CD4-positive, alpha-beta T cell (primary cell): ENCODE measurements at regions of chr2 and their contacts with region 1.

Region 1: DNA sequence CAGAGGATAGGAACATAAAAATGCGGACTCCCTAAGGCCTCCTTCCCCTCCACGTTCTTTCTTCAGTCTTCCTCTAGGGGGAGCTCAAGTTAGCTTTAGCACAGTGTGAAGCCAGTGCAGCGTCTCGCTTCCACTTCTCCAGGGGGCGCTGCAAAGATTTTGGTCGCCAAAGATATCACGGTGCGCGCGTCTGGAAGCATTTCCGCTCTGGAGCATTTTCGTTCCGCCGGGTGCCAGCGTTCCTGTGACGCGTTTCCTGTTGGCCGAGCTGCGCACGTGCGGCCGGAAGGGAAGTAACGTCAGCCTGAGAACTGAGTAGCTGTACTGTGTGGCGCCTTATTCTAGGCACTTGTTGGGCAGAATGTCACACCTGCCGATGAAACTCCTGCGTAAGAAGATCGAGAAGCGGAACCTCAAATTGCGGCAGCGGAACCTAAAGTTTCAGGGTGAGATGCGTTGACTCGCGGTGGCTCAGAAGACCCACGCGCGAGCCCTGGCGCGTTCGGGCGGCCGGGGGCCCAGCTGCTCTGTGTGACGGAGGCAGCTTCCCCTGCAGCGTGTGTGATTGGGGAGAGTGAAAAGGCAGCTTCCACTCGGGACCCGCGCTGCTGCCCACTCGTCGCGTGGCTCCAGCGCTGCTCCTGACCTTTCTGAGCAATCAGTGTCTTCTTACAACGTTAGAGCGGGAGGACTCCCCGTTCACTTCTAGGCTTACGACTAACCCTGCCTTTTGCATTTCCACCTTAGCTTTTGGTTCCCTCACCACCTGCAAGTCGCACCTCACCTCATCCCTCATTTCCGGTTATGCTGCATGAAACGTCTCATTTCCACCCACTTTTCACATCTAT is at the start of gene DDX18:
- DNase-seq: peak; percentile 94 to 99 (median 96)
- ATAC-seq: peak; percentile 84
- H3K4me3 ChIP-seq: peak within 1 kb of the TSS; percentile 73
- H3K4me3 Mint-ChIP-seq: peak within 1 kb of the TSS; percentile 86
- H3K27ac ChIP-seq: peak within 1 kb of the TSS; percentile 96 to 97
- H3K27ac Mint-ChIP-seq: peak within 1 kb of the TSS; percentile 94
- H3K4me1 ChIP-seq: peaks cover 16% of the 10 kb centered on the region
- H3K4me1 Mint-ChIP-seq: peaks cover 52% of the 10 kb centered on the region
- H3K27me3 ChIP-seq: no peaks in the 10 kb centered on the region
- H3K27me3 Mint-ChIP-seq: no peaks in the 10 kb centered on the region
- CTCF ChIP-seq: peak; percentile 100
- total RNA-seq, gene DDX18: 172 to 177 TPM

Region 2: GRCh38 chr2:117832905-117833613 is 18.4 kb after region 1 on chr2:
- CTCF ChIA-PET with region 1: interaction called, 8 read pairs
- POLR2A ChIA-PET with region 1: interaction called, 3 read pairs
- intact Hi-C with region 1: loop called in 1 of 2 experiments (anchors 2 kb)
- DNase-seq: peak in 4 of 14 experiments; percentile 8 to 44 (median 29)
- ATAC-seq: peak; percentile 55
- H3K4me3 ChIP-seq: no peak overlapping the region
- H3K4me3 Mint-ChIP-seq: no peak overlapping the region
- H3K27ac ChIP-seq: no peak overlapping the region
- H3K27ac Mint-ChIP-seq: peak overlapping the region; percentile 49
- H3K4me1 ChIP-seq: peaks cover 16% of the 10 kb centered on the region
- H3K4me1 Mint-ChIP-seq: no peaks in the 10 kb centered on the region
- H3K27me3 ChIP-seq: no peaks in the 10 kb centered on the region
- H3K27me3 Mint-ChIP-seq: no peaks in the 10 kb centered on the region
- CTCF ChIP-seq: no peak

Region 3: DNA sequence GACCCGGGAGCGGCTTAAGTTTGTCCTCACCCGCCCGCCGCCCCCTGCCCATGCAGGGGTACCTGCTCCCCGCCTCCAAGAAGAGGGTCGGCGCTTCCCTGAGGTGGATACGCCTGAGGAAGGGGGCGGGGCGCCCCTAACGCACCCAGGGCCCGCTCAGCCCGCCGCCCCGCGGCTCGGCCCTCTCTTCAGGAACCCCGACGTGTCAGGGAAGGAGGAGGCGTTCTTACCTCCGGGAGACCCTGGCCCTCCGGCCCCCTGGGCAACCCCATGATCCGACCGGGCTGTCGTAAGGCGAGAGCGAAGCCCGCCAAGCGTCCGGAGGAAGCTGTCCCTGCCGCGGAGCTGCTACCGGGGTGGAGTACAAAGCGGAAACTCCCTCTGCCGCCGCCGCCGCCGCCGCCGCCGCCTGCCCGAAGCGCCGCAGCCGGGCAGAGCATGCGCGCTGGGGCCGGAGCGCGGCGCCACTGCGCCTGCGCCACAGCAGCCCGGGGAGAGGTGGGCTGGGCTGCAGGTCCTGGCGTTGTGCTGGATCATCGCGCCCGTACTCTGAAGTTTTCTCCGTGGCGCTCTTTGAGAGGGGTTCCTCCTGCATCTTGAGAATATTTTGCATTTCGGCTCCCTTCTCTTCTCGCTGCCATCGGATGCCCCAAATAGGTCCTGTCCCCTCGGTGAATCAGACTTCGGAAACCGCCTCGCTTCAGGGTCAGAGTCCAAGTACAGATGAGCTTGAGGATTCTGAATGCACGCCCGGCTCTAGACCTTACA is 199.3 kb after region 1 on chr2 and contains the start of gene CCDC93:
- CTCF ChIA-PET with region 1: interaction called, 14 read pairs
- POLR2A ChIA-PET with region 1: interaction called, 20 read pairs
- intact Hi-C with region 1: loop called in 1 of 2 experiments (anchors 2 kb)
- DNase-seq: peak; percentile 73 to 96 (median 84)
- ATAC-seq: peak; percentile 83
- H3K4me3 ChIP-seq: peak within 1 kb of the TSS; percentile 89
- H3K4me3 Mint-ChIP-seq: peak within 1 kb of the TSS; percentile 92
- H3K27ac ChIP-seq: peak within 1 kb of the TSS; percentile 92 to 95
- H3K27ac Mint-ChIP-seq: peak within 1 kb of the TSS; percentile 86
- H3K4me1 ChIP-seq: peaks cover 33% of the 10 kb centered on the region
- H3K4me1 Mint-ChIP-seq: peaks cover 44% of the 10 kb centered on the region
- H3K27me3 ChIP-seq: no peaks in the 10 kb centered on the region
- H3K27me3 Mint-ChIP-seq: no peaks in the 10 kb centered on the region
- CTCF ChIP-seq: no peak
- total RNA-seq, gene CCDC93: 62.2 to 64.5 TPM

Region 4: DNA sequence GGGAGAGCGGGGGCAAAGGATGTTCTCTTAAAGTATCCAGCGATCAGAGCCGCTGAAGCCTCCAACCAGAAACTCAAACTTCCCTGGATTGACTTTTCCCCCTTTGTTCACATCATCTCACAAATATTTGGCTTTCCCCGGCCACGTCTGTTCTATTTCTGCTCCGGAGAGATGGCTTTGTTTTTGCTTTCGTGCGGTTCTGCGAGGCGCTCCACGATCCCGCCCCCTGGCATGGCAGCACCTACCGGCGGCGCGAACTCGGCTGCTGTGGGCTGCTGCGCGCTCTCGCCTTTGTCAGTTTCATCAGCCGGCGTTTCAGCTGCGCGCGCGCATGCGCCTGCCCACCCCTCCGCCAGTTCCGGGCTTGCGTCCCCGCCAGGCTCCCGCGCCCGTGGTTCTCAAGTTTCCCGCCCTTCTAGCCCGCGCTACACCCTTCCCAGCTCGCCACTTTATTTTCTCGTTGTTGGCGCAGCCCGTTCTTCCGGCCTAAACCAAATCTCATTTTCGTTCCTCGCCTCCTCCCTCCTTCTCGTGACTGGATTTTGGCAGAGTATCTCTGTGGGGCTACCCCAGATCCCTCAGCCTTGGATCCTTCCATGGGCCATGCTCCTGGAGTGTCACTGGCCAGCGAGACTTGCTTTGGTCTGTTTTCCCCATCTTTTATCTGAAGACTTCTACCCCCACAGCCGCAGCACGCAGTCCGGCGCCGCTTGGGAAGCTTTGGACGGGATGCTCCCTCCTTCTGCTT is 371.6 kb after region 1 on chr2:
- CTCF ChIA-PET with region 1: no interaction called
- POLR2A ChIA-PET with region 1: interaction called, 9 read pairs
- intact Hi-C with region 1: loop called (anchors 5 to 10 kb)
- DNase-seq: peak; percentile 70 to 96 (median 86)
- ATAC-seq: peak; percentile 94
- H3K4me3 ChIP-seq: peak overlapping the region; percentile 76
- H3K4me3 Mint-ChIP-seq: peak overlapping the region; percentile 96
- H3K27ac ChIP-seq: peak overlapping the region; percentile 69 to 71
- H3K27ac Mint-ChIP-seq: peak overlapping the region; percentile 87
- H3K4me1 ChIP-seq: peaks cover 18% of the 10 kb centered on the region
- H3K4me1 Mint-ChIP-seq: peaks cover 16% of the 10 kb centered on the region
- H3K27me3 ChIP-seq: no peaks in the 10 kb centered on the region
- H3K27me3 Mint-ChIP-seq: no peaks in the 10 kb centered on the region
- CTCF ChIP-seq: no peak

Region 5: GRCh38 chr2:119366649-119367471 is 1552.2 kb after region 1 on chr2 and contains the starts of genes C2orf76 and DBI:
- CTCF ChIA-PET with region 1: interaction called, 3 read pairs
- POLR2A ChIA-PET with region 1: interaction called, 4 read pairs
- intact Hi-C with region 1: loop called in 1 of 2 experiments (anchors 5 kb)
- DNase-seq: peak; percentile 82 to 97 (median 88)
- ATAC-seq: peak; percentile 93
- H3K4me3 ChIP-seq: peak within 1 kb of the TSS; percentile 94
- H3K4me3 Mint-ChIP-seq: peak within 1 kb of the TSS; percentile 91
- H3K27ac ChIP-seq: peak within 1 kb of the TSS; percentile 59 to 76
- H3K27ac Mint-ChIP-seq: peak within 1 kb of the TSS; percentile 89
- H3K4me1 ChIP-seq: peaks cover 41% of the 10 kb centered on the region
- H3K4me1 Mint-ChIP-seq: peaks cover 59% of the 10 kb centered on the region
- H3K27me3 ChIP-seq: no peaks in the 10 kb centered on the region
- H3K27me3 Mint-ChIP-seq: no peaks in the 10 kb centered on the region
- CTCF ChIP-seq: no peak
- total RNA-seq, gene C2orf76: 2.8 to 4.5 TPM
- total RNA-seq, gene DBI: 23.6 to 27.4 TPM